Left ventricle myocardium inferior (tissue), 1 donor: ENCODE measurements at regions of chr3 and their contacts with region 1.

Region 1: GRCh38 chr3:157572559-157573270 is 69.5 kb upstream of the VEPH1 start:
- DNase-seq: no peak
- H3K4me3 ChIP-seq: no peak overlapping the region
- H3K27ac ChIP-seq: no peak overlapping the region
- H3K4me1 ChIP-seq: peaks cover 8% of the 10 kb centered on the region
- H3K27me3 ChIP-seq: no peaks in the 10 kb centered on the region
- CTCF ChIP-seq: peak; percentile 73

Region 2: GRCh38 chr3:157464321-157464720 is 108.4 kb before region 1 on chr3:
- intact Hi-C with region 1: no loop called
- DNase-seq: no peak
- H3K4me3 ChIP-seq: no peak overlapping the region
- H3K27ac ChIP-seq: peak overlapping the region; percentile 3
- H3K4me1 ChIP-seq: no peaks in the 10 kb centered on the region
- H3K27me3 ChIP-seq: peaks cover 11% of the 10 kb centered on the region
- CTCF ChIP-seq: no peak

Region 3: DNA sequence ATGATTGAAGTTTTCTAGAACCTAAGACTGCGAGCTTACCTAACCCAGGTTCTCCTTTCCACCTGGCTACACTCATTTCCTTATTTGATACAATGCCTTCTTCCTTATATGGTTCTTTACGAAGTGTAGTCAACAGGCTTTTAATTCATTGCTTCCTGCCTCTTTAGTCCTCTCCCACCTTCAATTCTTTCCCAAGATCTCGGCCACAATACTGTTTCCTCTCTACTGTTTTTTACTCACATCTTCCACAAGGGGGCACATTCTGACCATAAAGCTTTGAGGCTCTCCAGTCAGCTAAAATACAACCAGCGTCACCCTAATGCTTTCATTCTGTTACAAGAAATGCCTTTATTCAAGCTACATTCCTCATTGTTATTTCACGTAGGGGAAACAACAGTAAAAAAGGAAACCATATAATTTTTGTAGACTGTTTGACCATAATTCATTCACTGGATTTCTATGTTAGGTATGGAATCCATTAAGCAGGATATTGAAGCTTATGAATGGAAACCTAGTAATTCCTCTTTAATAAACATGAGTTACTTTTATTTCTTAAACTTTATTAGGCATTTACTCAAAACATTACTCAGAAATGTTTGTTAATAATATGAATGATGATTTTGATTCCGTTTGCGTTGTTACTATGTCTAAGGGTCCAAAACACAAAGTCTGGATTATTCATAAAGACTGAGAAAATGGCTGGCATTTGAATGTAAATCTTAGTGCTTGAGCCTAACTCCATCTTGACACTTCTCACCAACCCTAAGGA is 40.0 kb before region 1 on chr3:
- intact Hi-C with region 1: loop called (anchors 5 kb)
- DNase-seq: no peak
- H3K4me3 ChIP-seq: no peak overlapping the region
- H3K27ac ChIP-seq: no peak overlapping the region
- H3K4me1 ChIP-seq: peaks cover 4% of the 10 kb centered on the region
- H3K27me3 ChIP-seq: no peaks in the 10 kb centered on the region
- CTCF ChIP-seq: peak; percentile 79